ENCODE measurements at regions of chr14 and their contacts with region 1.

Region 1: GRCh38 chr14:73633116-73634010 is 11.4 kb upstream of the DNAL1 start:
- DNase-seq: peak; percentile 62 to 77
- ATAC-seq: peak; percentile 93 to 95
- H3K4me3 ChIP-seq: peak overlapping the region; percentile 37
- H3K27ac ChIP-seq: peak overlapping the region; percentile 77 to 78
- H3K4me1 ChIP-seq: peaks cover 3% of the 10 kb centered on the region; the same call in 1 of the 3 replicates
- CTCF ChIP-seq: peak; percentile 91
- EP300 ChIP-seq: no peak
- POLR2A ChIP-seq: no peak
- RAD21 ChIP-seq: peak; percentile 90 to 93

Region 2: DNA sequence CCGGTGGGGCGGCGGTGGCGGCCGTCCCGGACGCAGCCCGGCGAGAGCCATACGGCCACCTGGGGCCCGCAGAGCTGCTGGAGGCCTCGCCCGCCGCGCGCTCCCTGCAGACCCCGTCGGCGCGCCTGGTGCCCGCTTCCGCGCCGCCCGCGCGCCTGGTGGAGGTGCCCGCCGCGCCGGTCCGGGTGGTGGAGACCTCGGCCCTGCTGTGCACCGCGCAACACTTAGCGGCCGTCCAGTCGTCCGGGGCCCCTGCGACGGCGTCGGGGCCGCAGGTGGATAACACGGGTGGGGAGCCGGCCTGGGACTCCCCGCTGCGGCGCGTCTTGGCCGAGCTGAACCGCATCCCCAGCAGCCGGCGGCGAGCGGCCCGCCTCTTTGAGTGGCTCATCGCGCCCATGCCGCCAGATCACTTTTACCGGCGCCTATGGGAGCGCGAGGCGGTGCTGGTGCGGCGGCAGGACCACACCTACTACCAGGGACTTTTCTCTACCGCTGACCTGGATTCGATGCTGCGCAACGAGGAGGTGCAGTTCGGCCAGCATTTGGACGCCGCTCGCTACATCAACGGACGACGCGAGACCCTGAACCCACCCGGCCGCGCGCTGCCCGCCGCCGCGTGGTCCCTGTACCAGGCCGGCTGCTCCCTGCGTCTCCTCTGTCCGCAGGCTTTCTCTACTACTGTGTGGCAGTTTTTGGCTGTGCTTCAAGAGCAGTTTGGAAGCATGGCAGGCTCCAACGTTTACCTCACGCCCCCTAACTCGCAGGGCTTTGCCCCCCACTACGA is 141.9 kb before region 1 on chr14:
- CTCF ChIA-PET with region 1: interaction called, 11 read pairs
- POLR2A ChIA-PET with region 1: interaction called, 5 read pairs
- DNase-seq: peak; percentile 65 to 67
- ATAC-seq: peak; percentile 83 to 87
- H3K4me3 ChIP-seq: peak overlapping the region; percentile 81
- H3K27ac ChIP-seq: peak overlapping the region; percentile 88 to 99
- H3K4me1 ChIP-seq: peaks cover 18% of the 10 kb centered on the region; the same call in 2 of the 3 replicates
- CTCF ChIP-seq: no peak
- EP300 ChIP-seq: no peak
- POLR2A ChIP-seq: peak; percentile 54
- RAD21 ChIP-seq: no peak

Region 3: GRCh38 chr14:73503648-73504047 is 129.7 kb before region 1 on chr14:
- CTCF ChIA-PET with region 1: interaction called, 89 read pairs
- POLR2A ChIA-PET with region 1: interaction called, 4 read pairs
- DNase-seq: no peak
- ATAC-seq: no peak
- H3K4me3 ChIP-seq: no peak overlapping the region
- H3K27ac ChIP-seq: no peak overlapping the region
- H3K4me1 ChIP-seq: no peaks in the 10 kb centered on the region
- CTCF ChIP-seq: no peak
- EP300 ChIP-seq: no peak
- POLR2A ChIP-seq: no peak
- RAD21 ChIP-seq: no peak

Region 4: GRCh38 chr14:73568381-73568781 is 65.0 kb before region 1 on chr14:
- CTCF ChIA-PET with region 1: interaction called, 11 read pairs
- POLR2A ChIA-PET with region 1: interaction called, 3 read pairs
- DNase-seq: no peak
- ATAC-seq: no peak
- H3K4me3 ChIP-seq: peak overlapping the region; percentile 55
- H3K27ac ChIP-seq: peak overlapping the region; percentile 94 to 98
- H3K4me1 ChIP-seq: peaks cover 21% of the 10 kb centered on the region
- CTCF ChIP-seq: no peak
- EP300 ChIP-seq: no peak
- POLR2A ChIP-seq: no peak
- RAD21 ChIP-seq: no peak

Region 5: GRCh38 chr14:73620268-73620667 is 13.1 kb before region 1 on chr14:
- CTCF ChIA-PET with region 1: interaction called, 17 read pairs
- POLR2A ChIA-PET with region 1: no interaction called
- DNase-seq: no peak
- ATAC-seq: no peak
- H3K4me3 ChIP-seq: no peak overlapping the region
- H3K27ac ChIP-seq: no peak overlapping the region
- H3K4me1 ChIP-seq: no peaks in the 10 kb centered on the region
- CTCF ChIP-seq: no peak
- EP300 ChIP-seq: no peak
- POLR2A ChIP-seq: no peak
- RAD21 ChIP-seq: no peak

Region 6: DNA sequence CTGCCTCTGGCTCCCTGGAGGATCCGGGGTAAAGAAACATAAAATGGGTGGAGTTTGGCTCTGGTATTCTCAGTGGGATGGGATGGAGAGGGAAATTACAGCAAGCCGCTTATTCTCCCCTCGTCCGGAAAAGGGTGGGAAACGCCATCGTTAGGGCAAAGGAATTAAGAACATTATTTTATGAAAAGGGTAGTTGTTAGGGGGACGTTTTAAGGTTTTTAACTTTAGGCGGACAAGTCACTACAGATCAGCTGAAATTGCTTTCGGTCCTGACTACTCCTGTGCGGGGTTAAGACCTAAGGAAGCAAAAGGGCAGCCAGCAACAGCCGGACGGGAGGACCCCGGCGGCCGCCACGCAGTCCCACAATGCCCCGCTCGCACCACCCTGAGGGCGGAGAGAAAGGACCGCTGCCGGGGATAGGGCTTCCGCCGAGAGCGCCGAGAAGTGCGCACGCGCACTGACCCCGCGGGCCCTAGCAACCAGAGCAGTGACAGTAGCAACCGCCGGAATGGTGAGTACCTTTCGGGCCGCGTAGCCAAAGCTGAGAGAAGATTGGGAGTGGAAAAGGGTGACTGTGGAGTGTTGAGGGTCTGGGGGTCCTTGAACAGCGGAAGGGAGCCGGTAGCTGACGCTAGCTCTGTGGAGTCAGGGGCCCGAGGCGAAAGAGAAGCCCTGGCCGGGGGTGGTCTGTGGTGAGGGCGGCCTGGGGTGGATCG is 11.3 kb after region 1 on chr14 and contains the start of gene DNAL1:
- CTCF ChIA-PET with region 1: interaction called, 30 read pairs
- POLR2A ChIA-PET with region 1: no interaction called
- DNase-seq: peak; percentile 89 to 95
- ATAC-seq: peak; percentile 99
- H3K4me3 ChIP-seq: peak within 1 kb of the TSS; percentile 70
- H3K27ac ChIP-seq: peak within 1 kb of the TSS; percentile 81 to 83
- H3K4me1 ChIP-seq: peaks cover 14% of the 10 kb centered on the region
- CTCF ChIP-seq: no peak
- EP300 ChIP-seq: no peak
- POLR2A ChIP-seq: peak; percentile 90
- RAD21 ChIP-seq: no peak
- polyA plus RNA-seq, gene DNAL1: 9.2 and 16.3 TPM in 2 replicates

Region 7: GRCh38 chr14:73651005-73651404 is 17.6 kb after region 1 on chr14:
- CTCF ChIA-PET with region 1: interaction called, 30 read pairs
- POLR2A ChIA-PET with region 1: no interaction called
- DNase-seq: no peak
- ATAC-seq: no peak
- H3K4me3 ChIP-seq: no peak overlapping the region
- H3K27ac ChIP-seq: no peak overlapping the region
- H3K4me1 ChIP-seq: no peaks in the 10 kb centered on the region
- CTCF ChIP-seq: no peak
- EP300 ChIP-seq: no peak
- POLR2A ChIP-seq: no peak
- RAD21 ChIP-seq: no peak

Region 8: GRCh38 chr14:73795972-73796371 is 162.6 kb after region 1 on chr14:
- CTCF ChIA-PET with region 1: no interaction called
- POLR2A ChIA-PET with region 1: no interaction called
- DNase-seq: peak; percentile 49 to 78
- ATAC-seq: peak; percentile 43 to 76; a peak in 4 of 6 replicates
- H3K4me3 ChIP-seq: no peak overlapping the region
- H3K27ac ChIP-seq: peak overlapping the region; percentile 7 to 57; a peak in 4 of 6 replicates
- H3K4me1 ChIP-seq: peaks cover 36% of the 10 kb centered on the region
- CTCF ChIP-seq: no peak
- EP300 ChIP-seq: no peak
- POLR2A ChIP-seq: no peak
- RAD21 ChIP-seq: no peak

Region 9: GRCh38 chr14:74176400-74176793 is 543.0 kb after region 1 on chr14:
- CTCF ChIA-PET with region 1: no interaction called
- POLR2A ChIA-PET with region 1: no interaction called
- DNase-seq: no peak
- ATAC-seq: no peak
- H3K4me3 ChIP-seq: no peak overlapping the region
- H3K27ac ChIP-seq: no peak overlapping the region
- H3K4me1 ChIP-seq: no peaks in the 10 kb centered on the region
- CTCF ChIP-seq: no peak
- EP300 ChIP-seq: no peak
- POLR2A ChIP-seq: no peak
- RAD21 ChIP-seq: no peak